ENCODE measurements at regions of chr2 and their contacts with region 1.

Region 1: DNA sequence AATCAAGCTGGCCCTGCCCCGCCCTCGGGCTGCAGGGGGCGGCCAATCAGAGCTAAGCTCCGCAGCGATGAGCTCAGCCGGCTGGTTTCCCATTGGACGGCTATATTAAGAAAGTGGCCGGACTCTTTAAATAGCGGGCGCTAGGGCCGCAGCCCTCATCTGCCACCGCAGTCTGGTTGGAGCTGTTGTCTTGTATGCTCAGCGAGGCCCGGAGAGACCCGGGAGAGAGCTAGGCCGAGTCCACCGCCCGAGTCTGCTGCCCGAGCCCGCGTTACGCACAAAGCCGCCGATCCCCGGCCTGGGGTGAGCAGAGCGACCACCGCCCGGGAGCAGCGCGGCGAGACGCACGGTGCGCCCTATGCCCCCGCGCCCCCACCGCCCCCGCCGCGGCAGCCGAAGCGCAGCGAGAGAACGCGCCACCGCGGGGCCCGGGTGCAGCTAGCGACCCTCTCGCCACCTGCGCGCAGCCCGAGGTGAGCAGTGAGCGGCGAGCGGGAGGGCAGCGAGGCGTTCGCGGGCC is at the start of gene RHOB:
- DNase-seq: peak; percentile 98
- ATAC-seq: peak; percentile 92
- H3K4me3 ChIP-seq: peak within 1 kb of the TSS; percentile 65 to 79 (median 70)
- H3K4me3 Mint-ChIP-seq: peak within 1 kb of the TSS; percentile 95
- H3K27ac ChIP-seq: peak within 1 kb of the TSS; percentile 69 to 92
- H3K27ac Mint-ChIP-seq: peak within 1 kb of the TSS; percentile 96
- H3K4me1 ChIP-seq: peaks cover 15 to 20% of the 10 kb centered on the region in 2 donors
- H3K4me1 Mint-ChIP-seq: peaks cover 18% of the 10 kb centered on the region
- H3K27me3 ChIP-seq: peaks cover 0 to 21% (median 7%) of the 10 kb centered on the region in 4 experiments
- H3K27me3 Mint-ChIP-seq: peaks cover 14% of the 10 kb centered on the region
- CTCF ChIP-seq: no peak
- total RNA-seq, gene RHOB: 63.0 and 65.0 TPM in 2 replicates

Region 2: GRCh38 chr2:19347619-19348562 is 1099.1 kb before region 1 on chr2:
- CTCF ChIA-PET with region 1: no interaction called
- POLR2A ChIA-PET with region 1: no interaction called
- intact Hi-C with region 1: loop called (anchors 10 kb)
- DNase-seq: peak; percentile 99
- ATAC-seq: peak; percentile 89
- H3K4me3 ChIP-seq: peak overlapping the region; percentile 69 to 99 (median 85)
- H3K4me3 Mint-ChIP-seq: peak overlapping the region; percentile 94
- H3K27ac ChIP-seq: peak overlapping the region; percentile 86 to 92
- H3K27ac Mint-ChIP-seq: peak overlapping the region; percentile 99
- H3K4me1 ChIP-seq: peaks cover 43 to 46% of the 10 kb centered on the region in 2 donors
- H3K4me1 Mint-ChIP-seq: peaks cover 30% of the 10 kb centered on the region
- H3K27me3 ChIP-seq: peaks cover 0 to 47% (median 36%) of the 10 kb centered on the region in 4 experiments
- H3K27me3 Mint-ChIP-seq: peaks cover 30% of the 10 kb centered on the region
- CTCF ChIP-seq: no peak

Region 3: DNA sequence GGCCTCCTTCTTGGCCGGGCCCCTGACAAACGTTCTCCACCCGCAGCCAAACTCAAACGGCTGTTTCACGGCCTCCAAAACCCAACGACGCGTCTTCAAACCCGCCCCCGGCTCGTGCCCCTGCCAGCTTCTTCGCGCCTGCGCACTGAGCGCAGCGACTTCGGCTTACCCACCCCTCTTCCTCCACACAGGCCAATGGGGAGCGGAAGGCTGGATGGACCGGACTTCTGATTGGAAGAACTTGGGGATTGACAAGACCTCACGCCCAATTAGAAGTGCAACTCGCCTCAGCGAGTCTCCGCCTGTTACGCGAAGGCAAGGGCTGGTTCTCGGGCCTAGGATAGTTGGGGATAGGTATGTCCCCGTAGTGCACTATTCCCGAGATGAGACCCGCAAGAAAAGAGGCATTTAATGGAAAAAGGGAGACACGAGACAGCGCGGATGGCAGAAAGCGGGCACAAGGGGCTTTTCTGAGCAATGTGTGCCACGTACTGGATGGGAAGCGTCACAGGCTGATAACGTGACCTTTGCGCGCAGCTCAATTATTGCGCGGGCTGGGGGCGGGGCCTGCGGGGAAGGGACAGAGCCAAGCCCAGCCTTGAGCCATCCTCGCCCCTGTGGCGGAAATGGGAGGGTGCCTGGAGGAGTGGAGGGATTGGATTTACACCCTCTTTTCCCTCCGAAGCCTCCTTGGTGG is 395.3 kb before region 1 on chr2 and contains the start of gene LAPTM4A:
- CTCF ChIA-PET with region 1: no interaction called
- POLR2A ChIA-PET with region 1: interaction called, 4 read pairs
- intact Hi-C with region 1: loop called (anchors 2 kb)
- DNase-seq: peak; percentile 99
- ATAC-seq: peak; percentile 89
- H3K4me3 ChIP-seq: peak within 1 kb of the TSS; percentile 49 to 99 (median 85)
- H3K4me3 Mint-ChIP-seq: no peak within 1 kb of the TSS
- H3K27ac ChIP-seq: peak within 1 kb of the TSS; percentile 88 to 98
- H3K27ac Mint-ChIP-seq: no peak within 1 kb of the TSS
- H3K4me1 ChIP-seq: peaks cover 25 to 28% of the 10 kb centered on the region in 2 donors
- H3K4me1 Mint-ChIP-seq: peaks cover 30% of the 10 kb centered on the region
- H3K27me3 ChIP-seq: peaks cover 0 to 15% (median 7%) of the 10 kb centered on the region in 4 experiments
- H3K27me3 Mint-ChIP-seq: peaks cover 14% of the 10 kb centered on the region
- CTCF ChIP-seq: no peak
- total RNA-seq, gene LAPTM4A: 70.1 and 74.4 TPM in 2 replicates

Region 4: DNA sequence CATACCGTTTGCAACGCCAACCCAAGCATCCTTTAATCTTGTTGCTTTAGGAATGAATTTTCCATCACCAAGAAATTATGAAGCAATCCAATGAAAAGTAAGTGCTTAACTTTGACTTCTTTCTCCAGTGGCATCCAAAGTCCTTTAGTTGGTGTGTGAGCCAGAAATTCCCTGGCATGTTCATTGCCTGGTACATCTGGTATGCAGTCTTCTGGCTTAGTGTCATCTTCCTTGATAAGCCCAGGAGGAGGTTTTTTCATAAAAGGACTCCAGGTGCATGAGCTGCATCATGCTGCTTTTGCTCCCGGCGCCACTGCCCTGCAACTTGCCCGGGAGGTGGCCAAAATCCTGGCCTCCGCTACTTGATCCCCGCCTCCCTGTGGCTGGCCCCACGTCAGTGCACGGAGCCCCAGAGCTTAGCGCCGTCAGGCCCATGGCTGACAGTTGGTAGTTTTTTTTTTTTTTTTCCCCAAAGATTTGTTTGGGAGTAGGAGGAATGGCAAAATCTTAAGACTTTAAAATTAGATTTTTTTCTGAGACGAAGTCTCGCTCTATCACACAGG is 155.1 kb before region 1 on chr2:
- CTCF ChIA-PET with region 1: no interaction called
- POLR2A ChIA-PET with region 1: no interaction called
- intact Hi-C with region 1: no loop called
- DNase-seq: no peak
- ATAC-seq: no peak
- H3K4me3 ChIP-seq: no peak overlapping the region
- H3K4me3 Mint-ChIP-seq: no peak overlapping the region
- H3K27ac ChIP-seq: no peak overlapping the region
- H3K27ac Mint-ChIP-seq: no peak overlapping the region
- H3K4me1 ChIP-seq: no peaks in the 10 kb centered on the region
- H3K4me1 Mint-ChIP-seq: no peaks in the 10 kb centered on the region
- H3K27me3 ChIP-seq: no peaks in the 10 kb centered on the region
- H3K27me3 Mint-ChIP-seq: no peaks in the 10 kb centered on the region
- CTCF ChIP-seq: no peak

Region 5: DNA sequence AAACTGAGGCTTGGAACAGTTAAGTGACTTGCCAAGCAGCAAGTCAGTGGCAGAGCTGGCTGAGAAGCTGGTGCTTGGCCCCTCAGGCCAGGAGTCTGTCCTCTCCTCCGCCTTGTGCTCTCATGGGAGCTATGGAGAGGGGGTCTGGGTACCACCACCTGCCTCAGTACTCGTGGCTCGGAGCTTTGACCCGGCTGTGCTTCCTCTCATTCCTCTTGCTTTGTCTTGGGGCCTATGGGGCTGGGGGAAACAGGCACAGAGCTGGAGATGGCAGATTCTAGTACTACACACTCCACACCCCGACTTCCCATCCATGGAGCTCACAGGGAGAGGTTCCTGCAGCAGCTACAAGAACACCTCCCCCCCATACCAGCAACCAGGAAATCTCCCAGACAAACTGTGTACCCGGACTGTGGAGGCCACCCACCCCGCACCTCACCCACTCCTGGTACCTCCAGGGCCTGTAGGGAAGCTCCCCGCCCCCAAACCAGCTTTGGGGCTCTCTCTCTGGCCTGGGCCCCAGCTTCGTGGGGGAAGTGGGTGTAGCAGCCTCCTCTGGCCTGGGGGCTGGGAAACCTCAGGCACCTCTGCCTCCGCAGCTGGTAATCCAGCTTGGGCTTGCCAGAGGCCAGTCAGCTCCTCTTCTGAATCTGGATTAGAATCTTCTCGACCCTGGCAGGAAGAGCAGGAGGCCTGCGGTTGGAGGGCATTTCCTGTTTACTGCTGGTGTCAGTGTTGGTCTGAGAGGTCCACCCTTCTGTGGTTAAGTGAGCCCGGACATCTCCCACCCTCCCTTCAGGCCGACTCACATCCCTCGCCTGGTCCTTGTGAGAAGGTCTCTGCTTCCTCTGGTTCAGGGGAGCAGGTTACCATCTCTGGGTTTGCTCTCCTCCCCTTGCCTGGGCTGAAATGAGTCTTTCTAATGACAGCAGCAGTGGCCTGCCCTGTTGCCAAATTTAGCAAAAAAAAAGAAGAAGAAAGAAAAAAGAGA is 22.4 kb before region 1 on chr2:
- CTCF ChIA-PET with region 1: interaction called, 14 read pairs
- POLR2A ChIA-PET with region 1: interaction called, 17 read pairs
- intact Hi-C with region 1: no loop called
- DNase-seq: no peak
- ATAC-seq: peak; percentile 50
- H3K4me3 ChIP-seq: peak overlapping the region; percentile 5 to 52 (median 27)
- H3K4me3 Mint-ChIP-seq: peak overlapping the region; percentile 80
- H3K27ac ChIP-seq: peak overlapping the region; percentile 85 to 88
- H3K27ac Mint-ChIP-seq: peak overlapping the region; percentile 93
- H3K4me1 ChIP-seq: peaks cover 46 to 64% of the 10 kb centered on the region in 2 donors
- H3K4me1 Mint-ChIP-seq: peaks cover 49% of the 10 kb centered on the region
- H3K27me3 ChIP-seq: no peaks in the 10 kb centered on the region
- H3K27me3 Mint-ChIP-seq: no peaks in the 10 kb centered on the region
- CTCF ChIP-seq: no peak

Region 6: GRCh38 chr2:20595431-20596192 is 148.6 kb after region 1 on chr2:
- CTCF ChIA-PET with region 1: interaction called, 9 read pairs
- POLR2A ChIA-PET with region 1: interaction called, 11 read pairs
- intact Hi-C with region 1: loop called (anchors 1 kb)
- DNase-seq: peak; percentile 75
- ATAC-seq: peak; percentile 84
- H3K4me3 ChIP-seq: peak overlapping the region in 3 of 5 experiments; percentile 13 to 40 (median 39)
- H3K4me3 Mint-ChIP-seq: peak overlapping the region; percentile 83
- H3K27ac ChIP-seq: peak overlapping the region in 1 of 2 donors; percentile 50
- H3K27ac Mint-ChIP-seq: peak overlapping the region; percentile 74
- H3K4me1 ChIP-seq: peaks cover 37 to 45% of the 10 kb centered on the region in 2 donors
- H3K4me1 Mint-ChIP-seq: peaks cover 50% of the 10 kb centered on the region
- H3K27me3 ChIP-seq: peaks cover 0 to 14% (median 6%) of the 10 kb centered on the region in 4 experiments
- H3K27me3 Mint-ChIP-seq: peaks cover 24% of the 10 kb centered on the region
- CTCF ChIP-seq: no peak

Region 7: DNA sequence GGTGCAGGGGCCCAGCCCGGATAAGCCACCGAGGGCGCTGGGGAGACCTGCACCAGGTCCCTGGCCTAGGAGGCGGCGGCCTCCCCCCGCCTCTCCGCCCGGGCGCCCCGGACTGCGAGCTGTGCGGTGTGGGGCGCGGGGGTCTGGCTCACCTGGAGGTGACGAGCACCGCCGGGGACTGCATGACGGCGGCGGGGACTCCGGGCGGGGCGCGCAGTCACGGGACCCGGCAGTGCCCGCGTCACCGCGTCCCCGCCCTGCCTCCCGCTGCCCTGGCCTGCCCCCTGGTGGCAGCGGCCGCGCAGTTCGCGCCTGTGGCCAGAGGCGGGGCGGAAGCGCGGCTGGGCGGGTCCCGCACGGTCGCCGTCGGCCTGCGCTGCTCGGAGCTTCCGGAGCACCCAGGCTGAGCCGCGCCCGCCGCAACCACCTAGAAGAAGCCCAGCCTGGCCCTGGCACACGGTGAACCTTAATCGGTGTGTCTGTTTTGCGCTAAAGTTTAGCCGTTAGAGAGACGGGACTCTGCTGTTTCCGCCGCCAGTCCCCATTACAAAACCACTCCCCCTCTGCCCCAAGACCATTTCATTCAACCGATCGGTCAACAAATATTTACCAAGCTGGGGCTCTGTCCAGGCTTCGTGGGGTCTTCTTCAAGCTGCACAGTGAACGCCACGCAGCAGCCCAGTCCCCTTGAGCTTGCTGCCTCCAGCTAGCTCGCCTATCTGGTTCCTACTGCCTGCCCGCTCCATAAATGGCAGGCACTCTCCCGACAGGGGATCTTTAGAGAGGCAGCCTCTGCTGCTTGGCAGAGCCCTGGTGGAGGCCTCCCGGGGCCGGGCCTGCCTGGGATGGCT is 204.1 kb after region 1 on chr2 and contains the start of gene HS1BP3:
- CTCF ChIA-PET with region 1: interaction called, 63 read pairs
- POLR2A ChIA-PET with region 1: interaction called, 29 read pairs
- intact Hi-C with region 1: loop called (anchors 1 kb)
- DNase-seq: peak; percentile 96
- ATAC-seq: peak; percentile 96
- H3K4me3 ChIP-seq: peak within 1 kb of the TSS; percentile 73 to 90 (median 81)
- H3K4me3 Mint-ChIP-seq: peak within 1 kb of the TSS; percentile 88
- H3K27ac ChIP-seq: peak within 1 kb of the TSS; percentile 93 to 94
- H3K27ac Mint-ChIP-seq: peak within 1 kb of the TSS; percentile 97
- H3K4me1 ChIP-seq: peaks cover 41 to 49% of the 10 kb centered on the region in 2 donors
- H3K4me1 Mint-ChIP-seq: peaks cover 50% of the 10 kb centered on the region
- H3K27me3 ChIP-seq: peaks cover 0 to 4% (median 0%) of the 10 kb centered on the region in 4 experiments
- H3K27me3 Mint-ChIP-seq: peaks cover 3% of the 10 kb centered on the region
- CTCF ChIP-seq: peak; percentile 90
- total RNA-seq, gene HS1BP3: 27.5 and 27.8 TPM in 2 replicates

Region 8: DNA sequence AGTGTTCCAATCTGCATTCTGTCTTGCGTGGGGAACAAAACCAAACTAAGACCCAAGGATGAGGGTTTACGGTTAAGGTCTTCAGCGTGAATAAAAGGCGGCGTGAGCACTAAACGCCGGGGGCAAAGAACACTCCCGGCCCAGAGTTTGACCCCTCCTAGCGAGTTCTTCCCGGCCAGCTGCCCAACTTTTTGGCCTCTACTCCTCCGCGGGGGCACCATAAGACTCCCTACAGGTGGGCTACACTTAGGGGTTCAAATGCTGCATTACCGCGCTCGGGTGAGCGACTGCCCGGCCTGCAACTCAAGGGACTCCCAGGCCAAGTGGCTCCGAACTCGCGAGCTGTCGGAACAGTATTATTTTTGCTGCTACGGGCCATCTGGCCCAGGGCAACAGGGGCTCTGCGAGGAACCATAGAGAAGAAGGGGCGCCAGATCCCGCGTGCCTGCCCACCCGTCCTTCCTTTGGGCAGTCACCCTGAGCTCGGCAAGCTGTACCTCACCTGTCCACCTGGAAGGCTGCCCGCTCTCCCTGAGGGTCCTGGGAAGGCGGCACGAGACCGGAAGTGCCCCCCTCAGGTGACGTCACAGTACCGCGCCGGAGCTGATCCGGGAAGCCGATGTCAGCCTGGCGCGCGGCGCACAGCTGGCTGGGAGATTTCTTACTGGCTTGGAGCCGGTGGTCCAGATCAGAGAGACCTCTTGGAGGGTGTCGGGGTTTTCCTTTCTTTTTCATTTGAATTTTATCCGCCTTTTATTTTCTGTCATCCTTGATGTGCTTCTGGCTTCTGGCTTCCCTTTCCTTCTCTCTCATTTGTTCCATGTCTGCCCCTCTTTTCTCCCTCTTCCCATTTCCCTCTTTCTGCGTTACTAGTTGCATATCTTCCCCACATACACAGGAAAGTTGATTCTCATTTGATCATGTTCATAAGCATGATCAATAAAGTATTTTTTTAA is 375.8 kb after region 1 on chr2 and contains the start of gene LDAH:
- CTCF ChIA-PET with region 1: no interaction called
- POLR2A ChIA-PET with region 1: interaction called, 7 read pairs
- intact Hi-C with region 1: loop called (anchors 2 kb)
- DNase-seq: peak; percentile 92
- ATAC-seq: peak; percentile 79
- H3K4me3 ChIP-seq: peak within 1 kb of the TSS; percentile 64 to 99 (median 88)
- H3K4me3 Mint-ChIP-seq: peak within 1 kb of the TSS; percentile 98
- H3K27ac ChIP-seq: peak within 1 kb of the TSS; percentile 89 to 96
- H3K27ac Mint-ChIP-seq: peak within 1 kb of the TSS; percentile 99
- H3K4me1 ChIP-seq: peaks cover 0 to 7% of the 10 kb centered on the region in 2 donors
- H3K4me1 Mint-ChIP-seq: peaks cover 26% of the 10 kb centered on the region
- H3K27me3 ChIP-seq: peaks cover 0 to 2% (median 0%) of the 10 kb centered on the region in 4 experiments
- H3K27me3 Mint-ChIP-seq: peaks cover 1% of the 10 kb centered on the region
- CTCF ChIP-seq: no peak
- total RNA-seq, gene LDAH: 27.1 and 31.3 TPM in 2 replicates